ENCODE measurements at regions of chr17 and their contacts with region 1.

Region 1: GRCh38 chr17:75749545-75750389 is 15.2 kb downstream of the GALK1 start:
- DNase-seq: no peak
- H3K4me3 ChIP-seq: no peak overlapping the region
- CTCF ChIP-seq: peak; percentile 86

Region 2: GRCh38 chr17:75515496-75516254 is 234.1 kb before region 1 on chr17 and contains the start of gene CASKIN2:
- CTCF ChIA-PET with region 1: interaction called, 16 read pairs
- POLR2A ChIA-PET with region 1: no interaction called
- DNase-seq: peak; percentile 10
- H3K4me3 ChIP-seq: peak within 1 kb of the TSS; percentile 80
- CTCF ChIP-seq: peak; percentile 100

Region 3: GRCh38 chr17:75614006-75614405 is 135.8 kb before region 1 on chr17:
- CTCF ChIA-PET with region 1: interaction called, 1,427 read pairs
- POLR2A ChIA-PET with region 1: no interaction called
- DNase-seq: no peak
- H3K4me3 ChIP-seq: no peak overlapping the region
- CTCF ChIP-seq: peak; percentile 13

Region 4: GRCh38 chr17:75667021-75667790 is 82.6 kb before region 1 on chr17 and contains the starts of genes RECQL5 and SAP30BP:
- CTCF ChIA-PET with region 1: interaction called, 203 read pairs
- POLR2A ChIA-PET with region 1: interaction called, 5 read pairs
- DNase-seq: peak; percentile 90
- H3K4me3 ChIP-seq: peak within 1 kb of the TSS; percentile 100
- CTCF ChIP-seq: no peak

Region 5: GRCh38 chr17:75693500-75694481 is 56.0 kb before region 1 on chr17:
- CTCF ChIA-PET with region 1: no interaction called
- POLR2A ChIA-PET with region 1: no interaction called
- DNase-seq: peak; percentile 84
- H3K4me3 ChIP-seq: no peak overlapping the region; the same call in 1 of the 2 replicates
- CTCF ChIP-seq: peak; percentile 41

Region 6: DNA sequence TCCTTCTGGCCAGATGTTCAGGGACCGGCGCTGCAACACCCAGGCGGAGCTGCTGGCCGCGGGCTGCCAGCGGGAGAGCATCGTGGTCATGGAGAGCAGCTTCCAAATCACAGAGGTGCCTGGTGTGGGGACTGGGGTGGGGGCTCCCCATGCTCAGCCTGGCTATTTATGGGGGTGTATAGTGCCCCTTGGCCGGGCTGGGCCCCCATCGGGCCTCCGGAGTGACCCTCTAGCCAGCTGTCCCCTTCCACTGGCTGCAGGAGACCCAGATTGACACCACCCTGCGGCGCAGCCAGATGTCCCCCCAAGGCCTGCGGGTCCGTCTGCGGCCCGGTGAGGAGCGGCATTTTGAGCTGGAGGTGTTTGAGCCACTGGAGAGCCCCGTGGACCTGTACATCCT is 22.4 kb before region 1 on chr17:
- CTCF ChIA-PET with region 1: interaction called, 174 read pairs
- POLR2A ChIA-PET with region 1: no interaction called
- DNase-seq: no peak
- H3K4me3 ChIP-seq: no peak overlapping the region
- CTCF ChIP-seq: no peak

Region 7: DNA sequence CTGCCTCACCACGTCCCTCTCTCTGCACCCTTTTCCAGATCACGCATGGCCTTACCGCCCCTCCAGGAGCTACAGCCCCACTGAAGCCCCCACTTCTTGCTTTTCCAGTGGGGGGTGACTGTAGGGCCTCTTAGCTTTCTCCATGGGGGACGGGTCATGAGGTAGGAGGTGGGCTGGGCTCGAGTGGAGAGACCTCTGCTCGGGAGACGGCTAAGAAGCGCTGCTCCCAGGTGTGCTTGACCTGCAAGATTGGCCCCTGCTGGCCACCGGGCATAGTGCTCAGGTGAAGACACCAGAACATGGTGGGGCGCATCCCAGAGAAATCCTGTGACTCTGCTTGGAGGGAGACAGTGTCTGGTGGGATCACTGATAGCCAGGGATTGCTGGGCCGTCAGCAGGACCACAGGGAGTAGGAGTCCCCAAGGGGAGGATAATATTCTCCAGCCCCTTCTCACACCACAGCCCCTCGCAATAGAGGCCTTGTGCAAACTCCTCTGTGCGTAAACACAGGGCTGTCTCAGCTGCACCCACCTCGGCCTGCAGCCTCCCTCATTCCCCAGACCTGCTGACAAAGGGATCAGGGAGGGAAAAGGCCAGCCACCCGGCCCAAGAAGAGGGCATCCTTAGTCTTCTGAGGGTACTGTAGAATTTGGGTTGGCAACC is 24.2 kb after region 1 on chr17:
- CTCF ChIA-PET with region 1: interaction called, 11 read pairs
- POLR2A ChIA-PET with region 1: interaction called, 3 read pairs
- DNase-seq: no peak
- H3K4me3 ChIP-seq: no peak overlapping the region
- CTCF ChIP-seq: no peak

Region 8: DNA sequence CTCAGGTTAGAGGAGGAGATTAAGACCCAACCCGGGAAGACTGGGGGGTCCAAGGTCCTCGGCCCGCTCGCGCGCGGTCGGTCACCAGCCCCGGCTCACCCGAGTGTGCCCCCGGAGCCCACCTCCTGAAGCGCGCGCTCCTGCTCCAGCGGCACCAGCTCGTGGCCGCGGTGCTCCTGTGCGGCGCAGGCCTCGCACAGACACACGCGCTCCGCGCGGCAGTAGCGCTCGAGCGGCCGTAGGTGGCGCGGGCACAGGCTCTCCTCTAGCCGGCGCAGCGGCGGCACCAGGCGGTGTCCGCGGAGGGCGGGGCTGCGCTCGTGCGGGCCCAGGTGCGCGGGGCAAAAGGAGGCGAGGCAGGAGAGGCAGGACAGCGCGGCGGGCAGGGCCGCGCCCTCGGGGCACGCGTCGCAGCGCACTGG is 128.0 kb after region 1 on chr17:
- CTCF ChIA-PET with region 1: interaction called, 10 read pairs
- POLR2A ChIA-PET with region 1: no interaction called
- DNase-seq: no peak
- H3K4me3 ChIP-seq: peak overlapping the region; percentile 57
- CTCF ChIP-seq: peak; percentile 77